ENCODE measurements at regions of chr1 and their contacts with region 1.

Region 1: DNA sequence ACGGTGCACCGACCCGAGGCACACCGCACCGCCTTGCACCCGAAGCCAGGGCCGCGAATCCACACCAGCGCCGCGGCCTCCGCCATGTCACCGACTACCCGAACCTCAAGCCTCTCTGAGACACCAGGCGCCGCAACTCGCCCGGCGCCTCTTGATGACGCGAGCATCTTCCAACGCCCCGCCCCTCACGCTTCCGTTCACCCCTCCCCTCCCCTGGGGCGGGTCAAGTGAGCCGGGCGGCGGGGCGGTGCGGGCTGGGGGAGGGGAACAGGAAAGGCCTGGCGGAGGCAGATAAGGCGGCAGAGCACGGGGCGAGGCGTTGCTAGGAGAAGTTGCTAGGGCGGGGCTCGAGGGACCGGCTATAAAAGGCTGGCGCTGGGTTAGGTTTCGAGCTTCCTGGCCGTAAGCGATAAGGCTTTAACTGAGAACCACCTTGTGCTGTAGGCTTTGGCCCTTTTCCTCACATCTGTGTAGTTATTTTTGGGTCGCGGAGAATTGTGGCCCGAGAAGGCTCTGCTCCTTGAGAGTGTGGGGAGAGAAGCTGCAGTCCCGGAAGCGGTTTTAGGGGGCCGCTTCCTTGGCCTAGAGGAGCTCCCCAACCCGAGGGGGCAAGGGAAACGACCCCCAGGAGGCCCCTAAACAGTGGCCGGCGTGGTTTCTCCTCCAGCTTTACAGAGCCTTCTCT is at the start of gene SDE2:
- DNase-seq: peak; percentile 99
- H3K4me3 ChIP-seq: peak within 1 kb of the TSS; percentile 93
- H3K27ac ChIP-seq: peak within 1 kb of the TSS; percentile 96
- H3K4me1 ChIP-seq: peaks cover 64% of the 10 kb centered on the region
- CTCF ChIP-seq: no peak
- total RNA-seq, gene SDE2: 18.2 and 22.0 TPM in 2 replicates

Region 2: DNA sequence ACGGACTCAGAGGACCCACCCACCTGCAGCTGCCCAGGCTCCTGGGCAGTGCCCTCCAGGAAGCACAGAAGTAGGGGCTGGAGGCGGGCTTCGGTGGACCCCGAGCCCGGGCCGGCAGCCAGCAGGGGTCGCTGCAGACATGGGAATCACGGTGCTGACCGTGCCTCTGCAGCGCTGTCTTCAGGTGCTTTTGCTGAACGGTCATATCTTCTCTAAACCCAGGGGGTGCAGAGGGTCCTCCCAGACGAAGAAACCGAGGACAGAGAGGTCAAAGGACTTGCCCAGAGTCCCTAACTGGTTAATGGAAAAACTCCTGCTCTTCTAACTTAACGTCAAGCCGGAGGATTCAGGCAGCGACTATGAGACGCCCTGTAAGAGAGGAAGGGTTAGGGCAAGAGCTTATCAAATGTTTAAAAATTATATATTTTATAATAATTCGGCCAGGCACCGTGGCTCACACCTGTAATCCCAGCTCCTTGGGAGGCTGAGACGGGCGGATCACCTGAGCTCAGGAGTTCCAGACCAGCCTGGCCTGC is 36.9 kb before region 1 on chr1:
- CTCF ChIA-PET with region 1: no interaction called
- POLR2A ChIA-PET with region 1: no interaction called
- intact Hi-C with region 1: no loop called
- DNase-seq: peak; percentile 78
- H3K4me3 ChIP-seq: no peak overlapping the region
- H3K27ac ChIP-seq: no peak overlapping the region
- H3K4me1 ChIP-seq: peaks cover 8% of the 10 kb centered on the region
- CTCF ChIP-seq: peak; percentile 99

Region 3: GRCh38 chr1:225987491-225988316 is 11.7 kb before region 1 on chr1:
- CTCF ChIA-PET with region 1: interaction called, 4 read pairs
- POLR2A ChIA-PET with region 1: interaction called, 11 read pairs
- intact Hi-C with region 1: no loop called
- DNase-seq: peak; percentile 68
- H3K4me3 ChIP-seq: no peak overlapping the region
- H3K27ac ChIP-seq: no peak overlapping the region
- H3K4me1 ChIP-seq: peaks cover 20% of the 10 kb centered on the region
- CTCF ChIP-seq: peak; percentile 94

Region 4: GRCh38 chr1:226029093-226029496 is 29.7 kb after region 1 on chr1:
- CTCF ChIA-PET with region 1: interaction called, 3 read pairs
- POLR2A ChIA-PET with region 1: interaction called, 21 read pairs
- intact Hi-C with region 1: no loop called
- DNase-seq: peak; percentile 83
- H3K4me3 ChIP-seq: peak overlapping the region; percentile 1
- H3K27ac ChIP-seq: peak overlapping the region; percentile 47
- H3K4me1 ChIP-seq: peaks cover 25% of the 10 kb centered on the region
- CTCF ChIP-seq: no peak

Region 5: GRCh38 chr1:226062558-226063223 is 63.3 kb after region 1 on chr1 and contains the start of gene H3-3A:
- CTCF ChIA-PET with region 1: interaction called, 3 read pairs
- POLR2A ChIA-PET with region 1: interaction called, 10 read pairs
- intact Hi-C with region 1: loop called (anchors 1 kb)
- DNase-seq: peak; percentile 96
- H3K4me3 ChIP-seq: peak within 1 kb of the TSS; percentile 89
- H3K27ac ChIP-seq: peak within 1 kb of the TSS; percentile 92
- H3K4me1 ChIP-seq: peaks cover 33% of the 10 kb centered on the region
- CTCF ChIP-seq: 0 out of 2 replicates have a peak, but pooled peaks have one; percentile 22
- total RNA-seq, gene H3-3A: 365 and 416 TPM in 2 replicates

Region 6: GRCh38 chr1:226109829-226110248 is 110.5 kb after region 1 on chr1:
- CTCF ChIA-PET with region 1: no interaction called
- POLR2A ChIA-PET with region 1: interaction called, 5 read pairs
- intact Hi-C with region 1: loop called (anchors 1 kb)
- DNase-seq: peak; percentile 72
- H3K4me3 ChIP-seq: peak overlapping the region; percentile 73
- H3K27ac ChIP-seq: peak overlapping the region; percentile 80
- H3K4me1 ChIP-seq: peaks cover 41% of the 10 kb centered on the region
- CTCF ChIP-seq: no peak

Region 7: GRCh38 chr1:226677027-226678020 is 678.0 kb after region 1 on chr1:
- CTCF ChIA-PET with region 1: no interaction called
- POLR2A ChIA-PET with region 1: no interaction called
- intact Hi-C with region 1: no loop called
- DNase-seq: peak; percentile 69
- H3K4me3 ChIP-seq: peak overlapping the region; percentile 66
- H3K27ac ChIP-seq: peak overlapping the region; percentile 98
- H3K4me1 ChIP-seq: peaks cover 98% of the 10 kb centered on the region
- CTCF ChIP-seq: peak; percentile 33; the same call in 1 of the 2 replicates

Measured in OCI-LY7 (cell line).